CD8-positive, alpha-beta T cell (primary cell): ENCODE measurements at regions of chrX and their contacts with region 1.

Region 1: GRCh38 chrX:51802917-51803688 is 59.9 kb downstream of the GSPT2 start:
- DNase-seq: peak; percentile 27 to 88 (median 63)
- ATAC-seq: peak; percentile 83
- H3K4me3 ChIP-seq: peak overlapping the region; percentile 73 to 91
- H3K4me3 Mint-ChIP-seq: peak overlapping the region; percentile 98
- H3K27ac ChIP-seq: peak overlapping the region; percentile 91 to 93
- H3K27ac Mint-ChIP-seq: peak overlapping the region; percentile 99
- H3K4me1 ChIP-seq: peaks cover 13% of the 10 kb centered on the region
- H3K4me1 Mint-ChIP-seq: peaks cover 39% of the 10 kb centered on the region
- H3K27me3 ChIP-seq: no peaks in the 10 kb centered on the region
- H3K27me3 Mint-ChIP-seq: peaks cover 1% of the 10 kb centered on the region
- CTCF ChIP-seq: no peak

Region 2: GRCh38 chrX:51641421-51642021 is 161.6 kb before region 1 on chrX:
- CTCF ChIA-PET with region 1: no interaction called
- POLR2A ChIA-PET with region 1: no interaction called
- intact Hi-C with region 1: loop called in 1 of 2 experiments (anchors 5 kb)
- DNase-seq: peak in 2 of 9 experiments; percentile 22 to 48
- ATAC-seq: no peak
- H3K4me3 ChIP-seq: no peak overlapping the region
- H3K4me3 Mint-ChIP-seq: no peak overlapping the region
- H3K27ac ChIP-seq: no peak overlapping the region
- H3K27ac Mint-ChIP-seq: no peak overlapping the region
- H3K4me1 ChIP-seq: no peaks in the 10 kb centered on the region
- H3K4me1 Mint-ChIP-seq: no peaks in the 10 kb centered on the region
- H3K27me3 ChIP-seq: no peaks in the 10 kb centered on the region
- H3K27me3 Mint-ChIP-seq: peaks cover 25% of the 10 kb centered on the region
- CTCF ChIP-seq: peak; percentile 27

Region 3: DNA sequence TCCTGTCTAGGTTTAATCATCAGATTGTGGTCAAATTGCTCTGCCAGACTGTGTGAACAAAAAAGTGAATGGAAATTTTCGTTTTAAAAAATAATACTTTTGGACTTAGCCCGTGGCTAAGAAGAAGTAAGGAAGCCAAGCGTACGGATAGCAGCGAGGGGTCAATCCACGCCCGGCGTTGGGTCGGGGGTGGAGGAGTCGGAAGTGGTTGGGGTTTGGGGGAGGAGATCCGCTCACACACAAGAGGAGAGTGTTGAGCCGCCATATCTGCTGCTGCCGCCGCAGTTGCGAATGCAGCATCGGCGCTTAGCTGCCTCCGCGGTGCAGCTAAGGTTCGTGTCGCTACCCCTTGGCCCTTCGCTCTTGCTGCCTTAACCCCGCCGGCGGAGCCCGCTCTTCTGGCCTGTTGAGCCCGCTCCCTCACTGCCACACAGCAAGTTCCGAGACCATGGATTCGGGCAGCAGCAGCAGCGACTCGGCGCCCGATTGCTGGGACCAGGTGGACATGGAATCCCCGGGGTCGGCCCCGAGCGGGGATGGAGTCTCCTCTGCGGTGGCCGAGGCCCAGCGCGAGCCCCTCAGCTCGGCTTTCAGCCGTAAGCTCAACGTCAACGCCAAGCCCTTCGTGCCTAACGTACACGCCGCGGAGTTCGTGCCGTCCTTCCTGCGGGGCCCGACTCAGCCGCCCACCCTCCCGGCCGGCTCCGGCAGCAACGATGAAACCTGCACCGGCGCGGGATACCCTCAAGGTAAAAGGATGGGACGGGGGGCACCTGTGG is 59.7 kb before region 1 on chrX and contains the start of gene GSPT2:
- CTCF ChIA-PET with region 1: no interaction called
- POLR2A ChIA-PET with region 1: no interaction called
- intact Hi-C with region 1: loop called in 1 of 2 experiments (anchors 2 kb)
- DNase-seq: peak; percentile 5 to 72 (median 55)
- ATAC-seq: peak; percentile 90
- H3K4me3 ChIP-seq: peak within 1 kb of the TSS; percentile 57 to 77
- H3K4me3 Mint-ChIP-seq: peak within 1 kb of the TSS; percentile 86
- H3K27ac ChIP-seq: peak within 1 kb of the TSS; percentile 46 to 62
- H3K27ac Mint-ChIP-seq: peak within 1 kb of the TSS; percentile 80
- H3K4me1 ChIP-seq: peaks cover 16% of the 10 kb centered on the region
- H3K4me1 Mint-ChIP-seq: peaks cover 19% of the 10 kb centered on the region
- H3K27me3 ChIP-seq: no peaks in the 10 kb centered on the region
- H3K27me3 Mint-ChIP-seq: peaks cover 2% of the 10 kb centered on the region
- CTCF ChIP-seq: no peak
- total RNA-seq, gene GSPT2: 6.4 to 6.9 TPM

Region 4: DNA sequence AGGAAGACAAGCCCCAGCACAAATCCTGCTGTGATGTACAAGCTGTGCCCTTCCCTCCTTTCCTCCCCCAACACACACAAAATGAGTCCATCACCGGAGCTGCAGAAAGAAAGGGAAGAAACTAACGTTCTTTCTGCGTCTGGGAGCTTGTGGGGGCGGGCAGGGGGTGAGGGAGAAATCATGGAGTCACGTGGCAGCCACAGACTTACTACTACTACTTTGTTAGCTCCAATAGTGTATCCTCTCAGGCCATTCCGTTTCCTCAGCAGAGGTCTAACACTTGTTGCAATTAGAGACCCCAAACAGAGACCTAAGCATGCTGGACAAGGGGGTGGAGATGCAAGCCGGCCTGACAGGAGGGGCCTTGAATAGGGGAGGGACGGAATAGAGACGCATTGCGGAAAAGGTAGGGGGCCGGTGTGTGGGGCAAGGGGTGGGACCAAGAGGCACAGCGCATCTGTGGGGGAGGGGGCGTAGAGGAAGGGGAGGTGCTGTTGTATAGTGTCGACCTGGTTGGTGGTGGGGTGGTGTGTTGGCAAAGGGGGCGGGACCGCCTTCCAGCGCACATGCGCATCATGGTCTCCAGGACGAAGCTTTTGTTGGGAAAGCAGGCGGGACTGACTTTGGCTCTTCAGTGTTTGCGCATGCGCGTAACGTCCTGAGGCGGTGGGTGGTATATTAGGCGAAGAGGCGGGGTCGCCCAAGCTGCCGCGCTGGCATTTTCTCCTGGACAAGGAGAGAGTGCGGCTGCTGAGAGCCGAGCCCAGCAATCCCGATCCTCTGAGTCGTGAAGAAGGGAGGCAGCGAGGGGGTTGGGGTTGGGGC is 90.0 kb after region 1 on chrX and contains the start of gene MAGED1:
- CTCF ChIA-PET with region 1: no interaction called
- POLR2A ChIA-PET with region 1: no interaction called
- intact Hi-C with region 1: loop called in 1 of 2 experiments (anchors 2 kb)
- DNase-seq: peak; percentile 47 to 87 (median 71)
- ATAC-seq: peak; percentile 87
- H3K4me3 ChIP-seq: peak within 1 kb of the TSS; percentile 56 to 68
- H3K4me3 Mint-ChIP-seq: peak within 1 kb of the TSS; percentile 93
- H3K27ac ChIP-seq: peak within 1 kb of the TSS; percentile 30 to 46
- H3K27ac Mint-ChIP-seq: peak within 1 kb of the TSS; percentile 92
- H3K4me1 ChIP-seq: peaks cover 12% of the 10 kb centered on the region
- H3K4me1 Mint-ChIP-seq: peaks cover 34% of the 10 kb centered on the region
- H3K27me3 ChIP-seq: no peaks in the 10 kb centered on the region
- H3K27me3 Mint-ChIP-seq: no peaks in the 10 kb centered on the region
- CTCF ChIP-seq: no peak
- total RNA-seq, gene MAGED1: 30.2 to 30.4 TPM

Region 5: GRCh38 chrX:53081925-53082772 is 1279.0 kb after region 1 on chrX and contains the start of gene TSPYL2:
- CTCF ChIA-PET with region 1: no interaction called
- POLR2A ChIA-PET with region 1: no interaction called
- intact Hi-C with region 1: loop called in 1 of 2 experiments (anchors 5 kb)
- DNase-seq: peak; percentile 85 to 96 (median 93)
- ATAC-seq: peak; percentile 77
- H3K4me3 ChIP-seq: peak within 1 kb of the TSS; percentile 68 to 75
- H3K4me3 Mint-ChIP-seq: peak within 1 kb of the TSS; percentile 88
- H3K27ac ChIP-seq: peak within 1 kb of the TSS; percentile 77 to 87
- H3K27ac Mint-ChIP-seq: peak within 1 kb of the TSS; percentile 95
- H3K4me1 ChIP-seq: peaks cover 27% of the 10 kb centered on the region
- H3K4me1 Mint-ChIP-seq: peaks cover 49% of the 10 kb centered on the region
- H3K27me3 ChIP-seq: no peaks in the 10 kb centered on the region
- H3K27me3 Mint-ChIP-seq: no peaks in the 10 kb centered on the region
- CTCF ChIP-seq: no peak
- total RNA-seq, gene TSPYL2: 978 to 1,030 TPM